ENCODE measurements at regions of chr12 and their contacts with region 1.

Region 1: DNA sequence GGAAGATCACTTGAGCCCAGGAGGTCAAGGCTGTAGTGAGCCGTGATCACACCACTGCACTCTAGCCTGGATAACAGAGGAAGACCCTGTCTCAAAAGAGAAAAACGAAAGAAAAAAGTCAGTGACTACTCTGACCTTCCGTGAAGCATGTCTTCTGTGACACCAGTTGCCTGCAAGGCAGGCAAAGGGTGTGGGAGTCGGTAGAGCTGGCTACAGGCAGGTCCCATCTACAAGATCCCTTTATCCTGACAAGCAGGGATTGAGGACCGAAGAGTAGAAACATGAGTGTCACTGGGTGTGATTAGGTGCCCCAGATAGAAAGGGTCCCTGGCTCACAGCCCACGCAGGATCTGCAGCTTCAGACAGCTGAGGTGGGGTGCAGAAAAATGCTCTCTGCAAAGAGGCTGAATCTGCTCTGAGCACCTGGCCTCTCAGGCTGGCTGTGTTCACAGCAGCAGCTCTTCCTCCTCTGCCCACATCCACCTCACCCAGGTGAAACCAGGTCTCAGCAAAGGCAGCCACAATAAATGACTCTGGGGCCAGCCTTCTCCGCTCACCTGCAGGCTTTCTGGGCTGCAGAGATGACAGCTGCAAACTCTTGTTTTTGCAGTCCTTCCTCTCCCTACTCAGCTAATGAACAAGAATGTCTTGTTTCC is 28.6 kb upstream of the HSP90B1 start:
- DNase-seq: no peak
- ATAC-seq: no peak; a peak in 1 of 6 replicates
- H3K4me3 ChIP-seq: no peak overlapping the region
- H3K27ac ChIP-seq: no peak overlapping the region
- H3K4me1 ChIP-seq: no peaks in the 10 kb centered on the region
- CTCF ChIP-seq: no peak
- EP300 ChIP-seq: no peak
- POLR2A ChIP-seq: no peak
- RAD21 ChIP-seq: no peak

Region 2: GRCh38 chr12:103884316-103884715 is 17.3 kb before region 1 on chr12:
- CTCF ChIA-PET with region 1: interaction called, 11 read pairs
- POLR2A ChIA-PET with region 1: no interaction called
- DNase-seq: peak in 1 of 2 experiments; percentile 62
- ATAC-seq: peak in 1 of 2 experiments; percentile 51; a peak in 2 of 6 replicates
- H3K4me3 ChIP-seq: no peak overlapping the region
- H3K27ac ChIP-seq: no peak overlapping the region
- H3K4me1 ChIP-seq: peaks cover 15% of the 10 kb centered on the region; the same call in 2 of the 3 replicates
- CTCF ChIP-seq: peak; percentile 58
- EP300 ChIP-seq: no peak
- POLR2A ChIP-seq: no peak
- RAD21 ChIP-seq: peak; percentile 71 to 80

Region 3: GRCh38 chr12:104022786-104023185 is 121.1 kb after region 1 on chr12:
- CTCF ChIA-PET with region 1: no interaction called
- POLR2A ChIA-PET with region 1: no interaction called
- DNase-seq: no peak
- ATAC-seq: no peak
- H3K4me3 ChIP-seq: no peak overlapping the region
- H3K27ac ChIP-seq: no peak overlapping the region
- H3K4me1 ChIP-seq: no peaks in the 10 kb centered on the region
- CTCF ChIP-seq: no peak
- EP300 ChIP-seq: no peak
- POLR2A ChIP-seq: no peak
- RAD21 ChIP-seq: no peak

Measured in A549 (cell line).